Psoas muscle (tissue), 8 donors: ENCODE measurements at regions of chr9 and their contacts with region 1.

Region 1: DNA sequence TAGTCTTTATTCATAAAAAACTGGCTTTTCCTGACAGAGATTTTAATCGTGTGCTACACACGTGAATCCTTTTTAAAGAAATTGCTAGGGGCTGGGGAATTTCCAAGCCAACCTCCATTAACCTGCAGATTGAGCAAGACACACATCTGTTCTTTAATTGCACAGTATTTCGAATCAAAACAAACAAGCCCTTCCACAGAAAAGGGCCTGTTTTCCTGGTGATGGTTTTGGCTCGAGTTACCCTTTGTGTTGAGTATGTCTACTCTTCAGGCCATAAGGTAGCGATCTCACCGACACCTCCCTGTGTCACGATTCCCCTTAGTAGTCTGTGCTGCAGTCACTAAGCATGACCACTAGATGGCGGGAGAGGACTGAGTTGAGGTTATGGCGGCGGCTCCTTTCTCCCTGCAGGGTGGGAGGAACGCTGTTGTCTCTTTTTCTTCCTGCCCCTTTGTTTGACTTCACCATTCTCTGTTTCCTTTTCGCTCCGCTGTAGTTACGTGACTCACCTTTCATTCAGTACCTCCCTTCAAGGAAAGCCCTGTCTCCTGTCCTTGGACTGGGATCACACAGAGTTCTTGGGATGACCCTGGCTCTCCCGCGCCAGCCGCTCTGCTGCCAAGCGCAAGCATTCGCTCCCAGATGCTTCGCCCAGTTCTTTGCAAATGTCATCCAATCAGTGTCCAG is 137.1 kb upstream of the SLC24A2 start:
- DNase-seq: peak; percentile 52 to 71
- ATAC-seq: peak; percentile 85 to 98 (median 94)
- H3K4me3 ChIP-seq: peak overlapping the region; percentile 60
- H3K27ac ChIP-seq: no peak overlapping the region
- H3K4me1 ChIP-seq: no peaks in the 10 kb centered on the region
- H3K27me3 ChIP-seq: peaks cover 0 to 2% (median 0%) of the 10 kb centered on the region in 3 donors
- CTCF ChIP-seq: peak; percentile 97

Region 2: GRCh38 chr9:20941174-20941690 is 1015.3 kb after region 1 on chr9:
- intact Hi-C with region 1: loop called (anchors 2 to 5 kb)
- DNase-seq: no peak
- ATAC-seq: peak; percentile 66 to 95 (median 90)
- H3K4me3 ChIP-seq: no peak overlapping the region
- H3K27ac ChIP-seq: no peak overlapping the region
- H3K4me1 ChIP-seq: no peaks in the 10 kb centered on the region
- H3K27me3 ChIP-seq: no peaks in the 10 kb centered on the region
- CTCF ChIP-seq: peak; percentile 85

Region 3: GRCh38 chr9:21110708-21111576 is 1185.0 kb after region 1 on chr9:
- intact Hi-C with region 1: loop called (anchors 5 kb)
- DNase-seq: no peak
- ATAC-seq: peak in 3 of 4 donors; percentile 66 to 86 (median 81)
- H3K4me3 ChIP-seq: no peak overlapping the region
- H3K27ac ChIP-seq: no peak overlapping the region
- H3K4me1 ChIP-seq: no peaks in the 10 kb centered on the region
- H3K27me3 ChIP-seq: no peaks in the 10 kb centered on the region
- CTCF ChIP-seq: peak; percentile 77